Natural killer cell (primary cell): ENCODE measurements at regions of chr12 and their contacts with region 1.

Region 1: DNA sequence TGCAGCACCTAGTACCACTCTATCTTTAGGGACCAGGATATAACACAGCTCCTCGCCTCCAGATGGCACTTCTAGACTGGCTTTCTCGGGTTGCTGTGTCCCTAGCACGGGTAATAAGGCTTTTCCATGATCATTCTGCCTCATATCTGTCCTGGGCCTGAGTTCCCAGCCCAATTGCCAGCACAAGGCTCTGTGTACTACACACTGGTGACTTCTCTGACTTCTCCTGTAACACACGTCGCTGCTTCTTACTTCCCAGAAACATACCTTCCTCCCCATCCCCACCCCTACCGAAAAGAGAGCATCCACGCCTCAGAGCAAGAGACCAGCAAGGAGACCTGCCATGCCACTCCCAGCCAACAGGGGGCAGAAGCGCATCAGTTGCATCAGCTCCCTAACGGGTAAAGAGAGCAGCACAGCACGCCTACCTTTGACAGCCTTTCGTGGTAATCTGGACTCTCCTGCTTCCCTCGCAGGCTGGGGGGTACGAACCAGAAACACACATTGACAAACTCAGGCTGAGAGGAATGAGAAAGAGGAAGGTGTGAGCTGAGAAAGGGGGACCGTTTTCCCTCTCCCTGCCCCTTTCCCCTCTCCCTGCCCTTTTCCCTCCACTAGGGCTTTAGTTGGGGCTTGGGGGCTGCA is 21.2 kb upstream of the ZNF740 start:
- DNase-seq: peak; percentile 84 to 94
- ATAC-seq: peak; percentile 93 to 100 (median 100)
- H3K4me3 ChIP-seq: no peak overlapping the region
- H3K4me3 Mint-ChIP-seq: no peak overlapping the region
- H3K27ac ChIP-seq: no peak overlapping the region
- H3K27ac Mint-ChIP-seq: peak overlapping the region in 1 of 2 donors; percentile 40
- H3K4me1 ChIP-seq: peaks cover 8% of the 10 kb centered on the region
- H3K4me1 Mint-ChIP-seq: peaks cover 9% of the 10 kb centered on the region in 2 donors
- H3K27me3 ChIP-seq: no peaks in the 10 kb centered on the region
- H3K27me3 Mint-ChIP-seq: no peaks in the 10 kb centered on the region
- CTCF ChIP-seq: peak; percentile 94

Region 2: DNA sequence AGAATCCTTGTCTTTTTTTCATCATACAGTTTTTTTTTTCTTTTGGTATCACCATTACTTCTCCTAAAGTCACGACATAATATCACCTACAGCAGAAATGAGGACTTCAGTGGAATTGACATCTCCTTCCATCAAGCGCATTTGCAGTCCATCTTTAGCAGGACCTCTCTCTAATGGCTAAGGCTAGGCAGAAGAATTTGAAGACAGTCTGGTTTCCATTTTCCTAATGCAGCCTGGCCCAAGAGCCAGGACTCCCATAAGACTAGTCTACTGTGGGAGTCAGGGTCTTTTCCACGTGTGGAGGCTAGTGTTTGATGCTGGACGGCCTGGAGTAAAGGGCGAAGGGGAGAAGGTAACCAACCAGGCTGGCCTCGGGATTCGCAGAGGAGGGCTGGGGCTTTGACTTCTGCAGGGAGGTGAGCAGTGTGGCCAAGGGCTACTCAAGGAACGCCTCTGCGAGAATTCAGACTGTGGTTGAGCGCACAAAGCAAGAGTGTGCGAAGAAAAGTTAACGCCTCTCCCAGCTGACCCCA is 20.4 kb after region 1 on chr12:
- intact Hi-C with region 1: no loop called
- DNase-seq: no peak
- ATAC-seq: peak; percentile 3 to 8 (median 4)
- H3K4me3 ChIP-seq: peak overlapping the region; percentile 74
- H3K4me3 Mint-ChIP-seq: peak overlapping the region; percentile 89
- H3K27ac ChIP-seq: peak overlapping the region; percentile 91
- H3K27ac Mint-ChIP-seq: peak overlapping the region; percentile 93 to 97
- H3K4me1 ChIP-seq: peaks cover 20% of the 10 kb centered on the region
- H3K4me1 Mint-ChIP-seq: peaks cover 34 to 49% of the 10 kb centered on the region in 2 donors
- H3K27me3 ChIP-seq: no peaks in the 10 kb centered on the region
- H3K27me3 Mint-ChIP-seq: no peaks in the 10 kb centered on the region
- CTCF ChIP-seq: no peak

Region 3: DNA sequence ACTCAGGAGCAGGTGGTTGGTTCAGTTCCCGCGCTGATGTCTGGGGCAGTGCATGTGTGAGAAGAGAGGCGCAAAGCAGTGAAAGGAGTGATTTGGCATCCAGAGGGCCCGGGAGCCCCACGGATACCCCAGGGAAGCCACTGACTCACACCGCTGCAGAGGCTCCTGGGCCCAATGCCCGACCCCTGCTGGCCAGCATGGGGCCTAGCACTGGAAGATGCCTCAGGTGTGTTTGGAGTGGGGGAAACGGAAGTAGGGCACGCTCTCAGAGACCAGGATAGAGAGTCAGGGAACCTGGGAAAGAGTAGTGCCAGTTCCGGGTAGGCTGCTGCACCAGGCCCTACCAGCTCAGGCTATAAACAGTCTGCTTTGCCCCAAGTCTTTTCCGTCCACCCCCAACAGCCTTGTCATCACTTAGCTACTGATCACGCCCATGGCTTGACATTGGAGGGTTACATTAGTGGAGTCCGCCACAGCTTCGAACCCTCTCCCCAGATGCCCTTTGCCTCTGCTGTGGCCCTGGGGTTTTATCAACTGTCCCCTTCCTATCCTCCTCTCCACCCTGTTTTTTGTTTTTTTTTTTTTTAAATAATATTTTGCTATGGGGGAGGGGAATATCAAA is 30.9 kb after region 1 on chr12:
- intact Hi-C with region 1: loop called (anchors 1 kb)
- DNase-seq: peak in 1 of 2 donors; percentile 73
- ATAC-seq: peak; percentile 52 to 81 (median 74)
- H3K4me3 ChIP-seq: no peak overlapping the region
- H3K4me3 Mint-ChIP-seq: no peak overlapping the region
- H3K27ac ChIP-seq: no peak overlapping the region
- H3K27ac Mint-ChIP-seq: no peak overlapping the region
- H3K4me1 ChIP-seq: no peaks in the 10 kb centered on the region
- H3K4me1 Mint-ChIP-seq: peaks cover 0 to 21% of the 10 kb centered on the region in 2 donors
- H3K27me3 ChIP-seq: no peaks in the 10 kb centered on the region
- H3K27me3 Mint-ChIP-seq: no peaks in the 10 kb centered on the region
- CTCF ChIP-seq: no peak

Region 4: GRCh38 chr12:53205747-53206419 is 46.6 kb after region 1 on chr12:
- intact Hi-C with region 1: loop called (anchors 5 kb)
- DNase-seq: peak; percentile 50 to 67
- ATAC-seq: peak; percentile 78 to 89 (median 81)
- H3K4me3 ChIP-seq: peak overlapping the region; percentile 47
- H3K4me3 Mint-ChIP-seq: peak overlapping the region; percentile 68
- H3K27ac ChIP-seq: peak overlapping the region; percentile 52
- H3K27ac Mint-ChIP-seq: peak overlapping the region; percentile 75 to 79
- H3K4me1 ChIP-seq: peaks cover 74% of the 10 kb centered on the region
- H3K4me1 Mint-ChIP-seq: peaks cover 58 to 71% of the 10 kb centered on the region in 2 donors
- H3K27me3 ChIP-seq: no peaks in the 10 kb centered on the region
- H3K27me3 Mint-ChIP-seq: no peaks in the 10 kb centered on the region
- CTCF ChIP-seq: no peak

Region 5: DNA sequence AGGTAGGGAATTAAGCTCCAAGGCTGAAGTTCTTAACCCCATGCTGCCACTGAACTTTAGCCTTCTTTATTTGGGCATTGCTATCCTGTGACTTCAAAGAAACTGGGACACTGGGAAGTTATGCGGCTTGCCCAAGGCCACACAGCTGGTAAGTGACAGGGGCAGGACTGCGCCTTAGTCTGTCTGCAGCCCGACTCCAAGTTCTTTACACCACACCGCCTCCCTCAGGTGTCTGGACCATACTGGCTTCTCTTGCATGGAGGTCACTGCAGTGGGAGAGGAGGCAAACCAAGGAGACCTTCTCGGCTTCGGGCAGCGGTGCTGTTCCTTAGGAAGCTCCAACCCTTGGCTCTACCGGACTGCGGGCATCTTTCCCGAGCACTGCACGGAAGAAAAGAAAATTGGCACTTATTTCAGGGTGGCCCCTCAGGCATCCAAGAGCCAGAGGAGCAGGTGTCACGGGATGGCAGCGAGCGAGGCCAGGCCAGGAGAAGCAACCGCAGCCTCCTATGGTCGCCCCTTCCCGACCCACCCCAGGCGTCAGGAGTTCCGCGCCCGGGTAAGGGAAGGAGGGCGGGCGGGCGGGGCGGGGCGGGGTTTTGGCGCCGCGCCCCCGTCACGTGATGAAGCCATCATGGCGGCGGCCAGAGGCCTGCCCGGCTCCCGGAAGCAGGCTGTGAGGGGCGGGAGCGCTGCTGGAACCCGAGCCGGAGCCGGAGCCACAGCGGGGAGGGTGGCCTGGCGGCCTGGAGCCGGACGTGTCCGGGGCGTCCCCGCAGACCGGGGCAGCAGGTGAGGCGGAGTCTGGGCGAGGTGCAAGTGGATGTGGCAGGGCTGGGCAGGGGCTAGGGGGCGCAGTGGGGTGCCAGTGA is 92.4 kb after region 1 on chr12:
- intact Hi-C with region 1: loop called (anchors 1 kb)
- DNase-seq: peak; percentile 64 to 85
- ATAC-seq: peak; percentile 90 to 91 (median 90)
- H3K4me3 ChIP-seq: peak overlapping the region; percentile 90
- H3K4me3 Mint-ChIP-seq: peak overlapping the region; percentile 98
- H3K27ac ChIP-seq: peak overlapping the region; percentile 68
- H3K27ac Mint-ChIP-seq: peak overlapping the region; percentile 84 to 88
- H3K4me1 ChIP-seq: peaks cover 37% of the 10 kb centered on the region
- H3K4me1 Mint-ChIP-seq: peaks cover 22 to 26% of the 10 kb centered on the region in 2 donors
- H3K27me3 ChIP-seq: no peaks in the 10 kb centered on the region
- H3K27me3 Mint-ChIP-seq: no peaks in the 10 kb centered on the region
- CTCF ChIP-seq: peak; percentile 41

Region 6: GRCh38 chr12:53287741-53288216 is 128.5 kb after region 1 on chr12:
- intact Hi-C with region 1: loop called (anchors 1 kb)
- DNase-seq: peak; percentile 62 to 90
- ATAC-seq: peak; percentile 77 to 95 (median 92)
- H3K4me3 ChIP-seq: no peak overlapping the region
- H3K4me3 Mint-ChIP-seq: no peak overlapping the region
- H3K27ac ChIP-seq: no peak overlapping the region
- H3K27ac Mint-ChIP-seq: peak overlapping the region in 1 of 2 donors; percentile 60
- H3K4me1 ChIP-seq: no peaks in the 10 kb centered on the region
- H3K4me1 Mint-ChIP-seq: peaks cover 7 to 8% of the 10 kb centered on the region in 2 donors
- H3K27me3 ChIP-seq: no peaks in the 10 kb centered on the region
- H3K27me3 Mint-ChIP-seq: no peaks in the 10 kb centered on the region
- CTCF ChIP-seq: peak; percentile 62

Region 7: GRCh38 chr12:53344824-53345485 is 185.6 kb after region 1 on chr12:
- intact Hi-C with region 1: loop called (anchors 1 kb)
- DNase-seq: peak; percentile 65 to 85
- ATAC-seq: peak; percentile 88 to 91 (median 91)
- H3K4me3 ChIP-seq: peak overlapping the region; percentile 57
- H3K4me3 Mint-ChIP-seq: peak overlapping the region; percentile 99
- H3K27ac ChIP-seq: peak overlapping the region; percentile 43
- H3K27ac Mint-ChIP-seq: peak overlapping the region; percentile 73 to 84
- H3K4me1 ChIP-seq: peaks cover 14% of the 10 kb centered on the region
- H3K4me1 Mint-ChIP-seq: peaks cover 11 to 19% of the 10 kb centered on the region in 2 donors
- H3K27me3 ChIP-seq: no peaks in the 10 kb centered on the region
- H3K27me3 Mint-ChIP-seq: peaks cover 0 to 4% of the 10 kb centered on the region in 2 donors
- CTCF ChIP-seq: peak; percentile 68